Astrocyte of the cerebellum (primary cell): ENCODE measurements at regions of chr4 and their contacts with region 1.

Region 1: GRCh38 chr4:109764789-109765402 is 35.0 kb upstream of the PLA2G12A start:
- DNase-seq: no peak
- H3K4me3 ChIP-seq: no peak overlapping the region
- CTCF ChIP-seq: no peak

Region 2: DNA sequence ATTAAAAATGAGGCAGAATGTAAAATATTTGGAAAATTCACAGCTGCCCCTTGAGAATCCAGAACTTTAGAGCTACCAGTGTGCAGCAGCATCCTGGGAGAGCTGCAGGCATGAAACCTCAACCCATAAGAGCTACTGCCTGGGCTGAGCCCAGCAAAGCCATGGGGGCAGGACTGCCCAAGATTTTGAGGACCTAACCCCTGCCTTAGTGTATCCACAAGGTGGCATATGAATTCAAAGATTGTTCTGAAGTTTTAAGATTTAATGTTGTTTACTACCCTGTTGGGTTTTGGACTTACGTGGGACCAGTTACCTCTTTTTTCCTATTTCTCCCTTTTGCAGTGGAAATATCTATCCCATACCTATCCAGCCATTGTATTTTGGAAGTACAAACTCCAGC is 88.0 kb before region 1 on chr4:
- in situ Hi-C with region 1: no loop called
- DNase-seq: no peak
- H3K4me3 ChIP-seq: no peak overlapping the region
- CTCF ChIP-seq: peak; percentile 6

Region 3: GRCh38 chr4:109811707-109812106 is 46.8 kb after region 1 on chr4:
- in situ Hi-C with region 1: loop called (anchors 5 kb)
- DNase-seq: no peak
- H3K4me3 ChIP-seq: no peak overlapping the region
- CTCF ChIP-seq: no peak

Region 4: GRCh38 chr4:109850601-109851000 is 85.7 kb after region 1 on chr4:
- in situ Hi-C with region 1: no loop called
- DNase-seq: no peak
- H3K4me3 ChIP-seq: no peak overlapping the region
- CTCF ChIP-seq: no peak